ENCODE measurements at regions of chr18 and their contacts with region 1.

Region 1: GRCh38 chr18:59697236-59697932 is at the start of gene CCBE1:
- DNase-seq: peak; percentile 92
- ATAC-seq: peak; percentile 80
- H3K4me3 Mint-ChIP-seq: peak within 1 kb of the TSS; percentile 72
- H3K27ac Mint-ChIP-seq: no peak within 1 kb of the TSS
- H3K4me1 Mint-ChIP-seq: peaks cover 72% of the 10 kb centered on the region
- H3K27me3 Mint-ChIP-seq: peaks cover 64% of the 10 kb centered on the region
- CTCF ChIP-seq: peak; percentile 95
- total RNA-seq, gene CCBE1: 8.0 to 9.7 TPM (median 9.7 TPM) in 3 replicates

Region 2: GRCh38 chr18:59459369-59460079 is 237.9 kb before region 1 on chr18:
- CTCF ChIA-PET with region 1: interaction called, 26 read pairs
- POLR2A ChIA-PET with region 1: interaction called, 4 read pairs
- DNase-seq: no peak
- ATAC-seq: peak; percentile 46; the same call in 1 of the 2 replicates
- H3K4me3 Mint-ChIP-seq: no peak overlapping the region
- H3K27ac Mint-ChIP-seq: no peak overlapping the region
- H3K4me1 Mint-ChIP-seq: peaks cover 22% of the 10 kb centered on the region
- H3K27me3 Mint-ChIP-seq: no peaks in the 10 kb centered on the region
- CTCF ChIP-seq: peak; percentile 62

Region 3: GRCh38 chr18:59646228-59646962 is 51.0 kb before region 1 on chr18:
- CTCF ChIA-PET with region 1: interaction called, 22 read pairs
- POLR2A ChIA-PET with region 1: no interaction called
- DNase-seq: peak; percentile 37
- ATAC-seq: peak; percentile 89
- H3K4me3 Mint-ChIP-seq: no peak overlapping the region
- H3K27ac Mint-ChIP-seq: no peak overlapping the region
- H3K4me1 Mint-ChIP-seq: peaks cover 33% of the 10 kb centered on the region
- H3K27me3 Mint-ChIP-seq: no peaks in the 10 kb centered on the region
- CTCF ChIP-seq: 0 out of 2 replicates have a peak, but pooled peaks have one; percentile 17

Region 4: GRCh38 chr18:59685501-59685900 is 11.9 kb before region 1 on chr18:
- CTCF ChIA-PET with region 1: interaction called, 128 read pairs
- POLR2A ChIA-PET with region 1: interaction called, 6 read pairs
- DNase-seq: no peak
- ATAC-seq: no peak
- H3K4me3 Mint-ChIP-seq: no peak overlapping the region
- H3K27ac Mint-ChIP-seq: no peak overlapping the region
- H3K4me1 Mint-ChIP-seq: peaks cover 82% of the 10 kb centered on the region
- H3K27me3 Mint-ChIP-seq: peaks cover 14% of the 10 kb centered on the region
- CTCF ChIP-seq: no peak

Region 5: DNA sequence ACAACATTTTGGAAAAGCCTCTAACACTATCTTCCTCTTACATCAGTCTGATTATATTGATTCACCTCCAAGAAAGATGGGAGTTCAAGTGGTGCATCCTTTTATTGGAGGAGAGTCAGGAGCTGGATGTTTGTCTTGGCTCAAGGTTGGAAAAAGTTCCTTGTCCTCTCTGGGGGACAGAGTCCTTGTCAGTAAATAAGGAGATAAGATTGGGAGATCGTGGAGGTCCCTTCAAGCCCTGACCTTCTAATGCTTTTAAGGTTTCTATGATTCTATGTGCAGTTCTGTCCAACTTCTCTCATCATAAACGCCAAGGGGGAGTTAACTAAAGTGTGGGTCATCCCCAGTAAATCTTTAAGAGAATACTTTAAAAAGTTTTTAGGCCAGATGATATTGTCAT is 60.7 kb after region 1 on chr18:
- CTCF ChIA-PET with region 1: interaction called, 11 read pairs
- POLR2A ChIA-PET with region 1: no interaction called
- DNase-seq: no peak
- ATAC-seq: no peak
- H3K4me3 Mint-ChIP-seq: no peak overlapping the region
- H3K27ac Mint-ChIP-seq: no peak overlapping the region
- H3K4me1 Mint-ChIP-seq: no peaks in the 10 kb centered on the region
- H3K27me3 Mint-ChIP-seq: no peaks in the 10 kb centered on the region; the same call in 1 of the 2 replicates
- CTCF ChIP-seq: no peak

Region 6: GRCh38 chr18:59823596-59824195 is 126.3 kb after region 1 on chr18:
- CTCF ChIA-PET with region 1: interaction called, 90 read pairs
- POLR2A ChIA-PET with region 1: interaction called, 7 read pairs
- DNase-seq: peak; percentile 86
- ATAC-seq: peak; percentile 97
- H3K4me3 Mint-ChIP-seq: no peak overlapping the region
- H3K27ac Mint-ChIP-seq: no peak overlapping the region
- H3K4me1 Mint-ChIP-seq: peaks cover 6% of the 10 kb centered on the region; the same call in 1 of the 2 replicates
- H3K27me3 Mint-ChIP-seq: no peaks in the 10 kb centered on the region
- CTCF ChIP-seq: peak; percentile 84

Region 7: DNA sequence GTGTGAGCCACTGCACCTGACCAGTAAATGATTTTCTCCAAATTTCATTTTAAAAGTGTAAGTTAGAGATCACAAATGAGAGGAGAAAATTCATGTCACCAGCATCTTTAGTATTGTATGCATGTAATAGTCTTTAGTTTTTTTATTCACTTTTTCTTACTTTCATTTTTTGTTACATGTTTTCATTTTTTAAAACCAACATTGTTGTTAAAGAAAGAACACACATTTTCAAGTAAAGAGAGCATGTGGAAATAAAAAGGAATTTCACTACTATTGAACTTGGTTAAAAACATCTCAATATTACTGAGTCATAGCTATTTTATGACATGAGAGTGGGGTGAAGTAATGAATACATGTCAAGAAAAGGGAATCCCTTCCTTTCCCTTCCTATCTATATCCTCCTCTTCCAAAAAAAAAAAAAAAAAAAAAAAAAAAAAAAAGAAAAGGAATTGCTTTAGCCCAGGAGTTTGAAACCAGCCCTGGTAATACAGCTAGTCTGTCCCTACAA is 173.3 kb after region 1 on chr18:
- CTCF ChIA-PET with region 1: no interaction called
- POLR2A ChIA-PET with region 1: no interaction called
- DNase-seq: no peak
- ATAC-seq: no peak
- H3K4me3 Mint-ChIP-seq: no peak overlapping the region
- H3K27ac Mint-ChIP-seq: no peak overlapping the region
- H3K4me1 Mint-ChIP-seq: peaks cover 54% of the 10 kb centered on the region
- H3K27me3 Mint-ChIP-seq: no peaks in the 10 kb centered on the region
- CTCF ChIP-seq: no peak